ENCODE measurements at regions of chr14 and their contacts with region 1.

Region 1: GRCh38 chr14:94080471-94081289 is at the start of gene DDX24:
- DNase-seq: peak; percentile 97 to 98 (median 98)
- ATAC-seq: peak; percentile 100
- H3K4me3 ChIP-seq: peak within 1 kb of the TSS; percentile 97
- H3K4me1 ChIP-seq: peaks cover 32% of the 10 kb centered on the region
- CTCF ChIP-seq: no peak
- total RNA-seq, gene DDX24: 90.6 to 197 (median 107) TPM

Region 2: GRCh38 chr14:94110552-94111181 is 30.0 kb after region 1 on chr14 and contains the start of gene IFI27:
- intact Hi-C with region 1: loop called in 1 of 2 experiments (anchors 2 kb)
- DNase-seq: peak; percentile 67 to 83 (median 72)
- ATAC-seq: peak; percentile 83
- H3K4me3 ChIP-seq: peak within 1 kb of the TSS; percentile 1
- H3K4me1 ChIP-seq: peaks cover 25% of the 10 kb centered on the region
- CTCF ChIP-seq: no peak
- total RNA-seq, gene IFI27: 427 to 1,655 (median 710) TPM

Region 3: DNA sequence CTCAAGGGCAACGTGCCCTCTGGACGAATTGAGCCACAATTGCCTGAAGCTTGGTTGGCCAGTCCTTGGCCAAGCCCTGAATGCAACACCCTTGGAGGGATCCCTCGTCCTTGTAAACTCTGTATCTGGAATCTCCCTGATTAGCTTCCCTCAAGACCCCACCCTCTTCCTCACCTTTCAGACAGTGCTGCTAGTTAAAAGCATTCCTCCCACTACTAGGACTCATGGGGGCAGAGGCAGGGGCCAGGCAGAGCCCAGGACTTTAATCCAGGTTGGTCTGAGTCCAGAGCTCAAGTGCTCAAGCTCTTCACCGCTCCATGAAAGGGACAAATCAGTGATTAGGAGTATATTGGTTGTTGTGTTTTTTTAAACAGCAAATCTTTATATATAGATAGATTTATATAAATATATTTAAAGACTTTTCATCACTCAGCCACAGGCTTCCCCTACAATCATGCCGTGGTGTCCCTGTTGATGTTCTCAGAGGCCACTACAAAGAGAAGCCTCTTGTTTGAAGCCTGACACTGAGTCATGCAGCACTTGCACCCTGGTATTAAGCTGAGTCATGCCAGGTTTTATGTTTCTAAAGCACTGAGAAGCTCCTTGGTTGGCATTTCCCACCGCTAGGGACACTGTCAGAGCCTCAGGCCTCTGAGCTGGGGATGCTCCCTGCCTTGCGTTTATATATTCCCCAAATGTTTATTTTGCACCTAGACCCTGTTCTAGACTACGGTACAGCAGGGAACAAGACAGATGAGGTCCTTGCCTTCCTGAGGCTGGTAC is 743.1 kb after region 1 on chr14:
- intact Hi-C with region 1: no loop called
- DNase-seq: no peak
- ATAC-seq: no peak
- H3K4me3 ChIP-seq: no peak overlapping the region
- H3K4me1 ChIP-seq: no peaks in the 10 kb centered on the region
- CTCF ChIP-seq: no peak

Measured in mucosa of descending colon (tissue), 3 donors.